MCF 10A (cell line): ENCODE measurements at regions of chr11 and their contacts with region 1.

Region 1: DNA sequence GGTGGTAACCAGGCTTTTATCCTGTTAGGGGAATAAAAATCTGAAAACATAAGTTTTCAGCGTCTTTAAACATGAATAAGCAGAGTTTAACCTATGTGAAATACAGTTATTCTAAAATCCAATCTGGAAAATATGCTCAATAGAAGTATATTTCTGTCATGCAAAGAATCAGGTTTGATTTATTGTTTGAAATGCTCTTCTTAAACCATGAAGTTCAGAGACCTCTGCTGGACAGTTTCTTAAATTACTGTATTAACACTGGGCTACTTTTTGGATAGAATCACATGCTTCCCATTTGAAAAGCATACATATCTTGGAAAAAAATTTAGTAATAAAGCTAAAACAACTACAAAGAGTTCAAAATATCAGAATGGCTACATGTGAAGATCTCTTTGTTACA is 25.4 kb downstream of the APIP start:
- DNase-seq: peak; percentile 64
- H3K4me3 Mint-ChIP-seq: no peak overlapping the region
- H3K27ac Mint-ChIP-seq: no peak overlapping the region
- H3K4me1 Mint-ChIP-seq: peaks cover 12% of the 10 kb centered on the region
- H3K27me3 Mint-ChIP-seq: no peaks in the 10 kb centered on the region
- CTCF ChIP-seq: peak; percentile 46

Region 2: DNA sequence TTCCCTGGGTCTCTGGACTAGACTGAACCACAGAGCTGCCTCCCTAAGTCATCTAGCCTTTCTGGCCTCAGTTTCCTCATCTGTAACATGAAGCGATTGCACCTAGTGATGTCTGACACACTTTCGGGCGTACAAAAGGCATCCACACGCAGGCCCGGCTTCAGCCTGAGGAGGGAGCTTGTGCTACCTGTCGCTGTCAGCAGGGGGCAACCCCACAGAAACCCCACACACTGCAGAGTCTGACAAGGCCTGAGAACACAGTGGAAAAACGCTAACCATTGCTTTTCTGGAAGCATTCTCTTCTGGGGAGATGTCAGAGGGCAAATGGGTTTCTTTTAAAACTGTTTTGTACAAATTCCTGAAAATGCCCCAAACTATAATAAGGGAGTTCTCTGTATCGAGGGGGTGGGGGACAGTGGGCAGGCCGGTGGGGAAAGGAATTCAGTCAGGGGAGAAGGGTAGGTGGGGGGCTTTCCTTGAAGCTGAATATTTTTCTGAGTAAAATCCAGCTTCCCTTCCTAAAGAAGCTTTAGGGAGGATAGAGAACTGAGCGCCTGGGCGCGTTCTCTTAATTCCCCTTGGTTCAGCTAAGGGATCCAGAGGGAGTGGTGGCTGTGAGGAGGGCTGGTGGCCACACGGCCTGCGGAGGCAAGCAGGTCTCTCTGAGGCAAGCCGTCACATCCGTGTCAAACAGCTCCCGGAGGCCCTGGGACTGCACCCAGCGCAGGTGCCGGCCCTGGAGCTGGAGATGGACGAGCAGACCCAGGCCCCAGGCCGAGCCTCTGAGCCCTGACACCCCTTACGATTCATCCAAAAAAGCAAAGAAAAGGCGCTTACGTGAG is 377.8 kb before region 1 on chr11:
- CTCF ChIA-PET with region 1: interaction called, 23 read pairs
- POLR2A ChIA-PET with region 1: interaction called, 3 read pairs
- intact Hi-C with region 1: loop called (anchors 1 kb)
- DNase-seq: peak; percentile 66
- H3K4me3 Mint-ChIP-seq: no peak overlapping the region
- H3K27ac Mint-ChIP-seq: no peak overlapping the region
- H3K4me1 Mint-ChIP-seq: no peaks in the 10 kb centered on the region
- H3K27me3 Mint-ChIP-seq: peaks cover 5% of the 10 kb centered on the region
- CTCF ChIP-seq: peak; percentile 63

Region 3: DNA sequence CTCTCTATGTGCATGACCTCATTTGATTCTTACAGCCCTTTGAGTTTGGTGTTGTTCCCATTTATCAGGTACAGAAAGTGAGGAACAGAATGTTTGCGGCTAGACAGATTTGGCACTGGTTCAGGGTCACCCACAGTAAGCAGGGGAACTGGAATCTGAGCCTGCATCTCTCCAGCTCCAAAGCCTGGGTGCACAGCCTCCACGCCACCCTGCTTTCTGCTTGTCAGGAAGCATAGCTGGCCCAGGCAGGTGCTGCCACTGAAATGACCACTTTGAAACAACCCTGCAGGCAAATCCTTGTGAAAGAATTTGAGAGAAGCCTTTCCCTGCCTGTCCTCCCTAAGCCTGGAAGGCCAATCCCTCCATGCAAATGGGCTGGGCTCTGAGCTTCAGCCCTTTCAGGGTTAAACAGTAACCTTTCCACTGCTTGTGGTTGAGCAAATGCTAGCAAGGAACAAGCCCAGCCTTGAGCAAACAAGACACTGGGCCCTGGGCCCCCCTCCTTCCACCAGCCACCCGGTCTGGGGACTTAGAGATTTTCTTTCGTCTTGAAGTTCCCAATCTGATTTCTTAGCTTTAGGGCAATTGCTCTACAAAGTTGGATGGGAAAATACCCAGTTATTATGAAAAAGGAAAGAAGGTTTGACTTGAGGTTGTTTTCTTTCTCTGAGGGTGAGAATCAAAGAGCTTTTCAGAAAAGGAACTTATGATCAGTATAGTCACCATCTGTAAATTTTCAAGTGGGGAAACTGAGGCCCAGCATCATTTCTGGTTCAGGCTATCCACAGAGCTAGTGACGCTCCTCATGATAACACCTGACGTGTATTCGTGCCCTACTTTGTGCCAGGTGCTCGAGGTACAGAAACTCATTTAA is 250.5 kb before region 1 on chr11:
- CTCF ChIA-PET with region 1: interaction called, 11 read pairs
- POLR2A ChIA-PET with region 1: interaction called, 3 read pairs
- intact Hi-C with region 1: no loop called
- DNase-seq: peak; percentile 86
- H3K4me3 Mint-ChIP-seq: peak overlapping the region; percentile 45
- H3K27ac Mint-ChIP-seq: peak overlapping the region; percentile 87
- H3K4me1 Mint-ChIP-seq: peaks cover 51% of the 10 kb centered on the region
- H3K27me3 Mint-ChIP-seq: no peaks in the 10 kb centered on the region
- CTCF ChIP-seq: no peak

Region 4: DNA sequence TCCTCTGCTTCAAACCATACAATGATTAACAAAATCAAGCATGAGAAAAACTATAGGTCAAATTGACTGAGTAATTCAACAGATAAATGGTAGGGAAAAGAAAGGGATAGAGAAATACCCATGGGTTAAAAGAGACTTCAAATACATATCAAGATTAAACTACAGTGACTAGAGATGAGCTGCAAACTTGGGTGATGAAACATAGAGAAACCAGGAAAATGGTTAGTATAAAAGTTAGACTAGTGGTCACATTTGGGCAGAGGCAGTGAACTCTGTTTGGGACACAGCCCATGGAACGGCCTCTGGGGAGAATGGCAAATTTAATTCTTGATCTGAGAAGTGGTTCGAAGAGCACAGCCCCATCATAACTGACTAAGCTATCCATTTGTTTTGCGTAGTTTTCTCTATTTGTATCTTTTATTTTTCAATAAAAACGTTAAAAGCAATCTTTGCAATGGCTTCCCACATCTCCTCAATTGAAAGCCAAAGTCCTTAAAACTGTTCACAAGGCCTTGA is 74.1 kb before region 1 on chr11:
- CTCF ChIA-PET with region 1: no interaction called
- POLR2A ChIA-PET with region 1: no interaction called
- intact Hi-C with region 1: no loop called
- DNase-seq: no peak
- H3K4me3 Mint-ChIP-seq: no peak overlapping the region
- H3K27ac Mint-ChIP-seq: no peak overlapping the region
- H3K4me1 Mint-ChIP-seq: no peaks in the 10 kb centered on the region
- H3K27me3 Mint-ChIP-seq: no peaks in the 10 kb centered on the region
- CTCF ChIP-seq: no peak

Region 5: GRCh38 chr11:34877375-34877975 is 13.3 kb before region 1 on chr11:
- CTCF ChIA-PET with region 1: interaction called, 11 read pairs
- POLR2A ChIA-PET with region 1: interaction called, 4 read pairs
- intact Hi-C with region 1: no loop called
- DNase-seq: no peak
- H3K4me3 Mint-ChIP-seq: no peak overlapping the region
- H3K27ac Mint-ChIP-seq: no peak overlapping the region
- H3K4me1 Mint-ChIP-seq: no peaks in the 10 kb centered on the region
- H3K27me3 Mint-ChIP-seq: no peaks in the 10 kb centered on the region
- CTCF ChIP-seq: no peak

Region 6: GRCh38 chr11:34907934-34908593 is 17.3 kb after region 1 on chr11:
- CTCF ChIA-PET with region 1: interaction called, 22 read pairs
- POLR2A ChIA-PET with region 1: no interaction called
- intact Hi-C with region 1: no loop called
- DNase-seq: no peak
- H3K4me3 Mint-ChIP-seq: no peak overlapping the region
- H3K27ac Mint-ChIP-seq: no peak overlapping the region
- H3K4me1 Mint-ChIP-seq: peaks cover 6% of the 10 kb centered on the region
- H3K27me3 Mint-ChIP-seq: no peaks in the 10 kb centered on the region
- CTCF ChIP-seq: no peak

Region 7: DNA sequence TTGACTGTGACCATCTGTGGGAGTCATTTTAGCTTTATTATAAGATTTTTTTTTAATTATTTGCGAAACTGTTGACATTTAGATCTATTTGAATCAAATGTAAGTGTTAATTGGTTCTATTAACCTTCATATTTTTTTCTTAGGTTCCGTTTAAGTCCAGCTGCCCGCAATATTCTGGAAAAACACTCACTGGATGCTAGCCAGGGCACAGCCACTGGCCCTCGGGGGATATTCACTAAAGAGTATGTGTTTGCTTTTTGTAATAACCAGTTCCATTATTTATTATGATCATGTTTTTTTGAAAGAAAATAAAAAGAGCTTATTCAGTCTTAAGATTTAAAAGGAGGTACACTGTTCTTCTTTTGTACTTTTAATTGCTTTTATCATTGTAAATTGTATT is 69.5 kb after region 1 on chr11:
- CTCF ChIA-PET with region 1: no interaction called
- POLR2A ChIA-PET with region 1: no interaction called
- intact Hi-C with region 1: no loop called
- DNase-seq: peak; percentile 7
- H3K4me3 Mint-ChIP-seq: no peak overlapping the region
- H3K27ac Mint-ChIP-seq: peak overlapping the region; percentile 55
- H3K4me1 Mint-ChIP-seq: peaks cover 5% of the 10 kb centered on the region
- H3K27me3 Mint-ChIP-seq: no peaks in the 10 kb centered on the region
- CTCF ChIP-seq: no peak